MCF 10A (cell line): ENCODE measurements at regions of chr1 and their contacts with region 1.

Region 1: GRCh38 chr1:156082309-156083091 is at the start of gene MEX3A:
- DNase-seq: peak; percentile 66
- H3K4me3 Mint-ChIP-seq: peak within 1 kb of the TSS; percentile 78
- H3K27ac Mint-ChIP-seq: no peak within 1 kb of the TSS
- H3K4me1 Mint-ChIP-seq: peaks cover 10% of the 10 kb centered on the region
- H3K27me3 Mint-ChIP-seq: no peaks in the 10 kb centered on the region
- CTCF ChIP-seq: no peak
- total RNA-seq, gene MEX3A: 0.88 and 0.91 TPM in 2 replicates

Region 2: DNA sequence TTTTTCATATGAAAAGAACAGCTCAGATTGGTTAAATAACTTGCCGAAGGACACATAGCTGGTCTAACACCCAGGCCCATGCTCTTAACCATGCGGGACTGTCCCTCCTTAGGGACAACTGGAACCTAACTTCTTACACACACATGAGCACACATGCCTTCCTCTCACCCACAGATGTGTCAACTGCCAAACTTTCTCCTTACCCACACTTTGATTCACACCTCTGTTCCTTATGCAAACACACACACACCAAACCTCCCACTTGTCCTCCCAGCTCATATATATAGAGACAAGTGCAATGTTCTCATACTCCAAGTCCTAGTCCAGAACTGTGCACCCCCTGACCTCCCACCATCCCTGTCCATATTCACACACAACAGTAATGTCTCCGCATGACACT is 17.3 kb before region 1 on chr1:
- CTCF ChIA-PET with region 1: interaction called, 10 read pairs
- POLR2A ChIA-PET with region 1: no interaction called
- intact Hi-C with region 1: no loop called
- DNase-seq: no peak
- H3K4me3 Mint-ChIP-seq: no peak overlapping the region
- H3K27ac Mint-ChIP-seq: no peak overlapping the region
- H3K4me1 Mint-ChIP-seq: peaks cover 19% of the 10 kb centered on the region
- H3K27me3 Mint-ChIP-seq: no peaks in the 10 kb centered on the region
- CTCF ChIP-seq: no peak